ENCODE measurements at regions of chr13 and their contacts with region 1.

Region 1: DNA sequence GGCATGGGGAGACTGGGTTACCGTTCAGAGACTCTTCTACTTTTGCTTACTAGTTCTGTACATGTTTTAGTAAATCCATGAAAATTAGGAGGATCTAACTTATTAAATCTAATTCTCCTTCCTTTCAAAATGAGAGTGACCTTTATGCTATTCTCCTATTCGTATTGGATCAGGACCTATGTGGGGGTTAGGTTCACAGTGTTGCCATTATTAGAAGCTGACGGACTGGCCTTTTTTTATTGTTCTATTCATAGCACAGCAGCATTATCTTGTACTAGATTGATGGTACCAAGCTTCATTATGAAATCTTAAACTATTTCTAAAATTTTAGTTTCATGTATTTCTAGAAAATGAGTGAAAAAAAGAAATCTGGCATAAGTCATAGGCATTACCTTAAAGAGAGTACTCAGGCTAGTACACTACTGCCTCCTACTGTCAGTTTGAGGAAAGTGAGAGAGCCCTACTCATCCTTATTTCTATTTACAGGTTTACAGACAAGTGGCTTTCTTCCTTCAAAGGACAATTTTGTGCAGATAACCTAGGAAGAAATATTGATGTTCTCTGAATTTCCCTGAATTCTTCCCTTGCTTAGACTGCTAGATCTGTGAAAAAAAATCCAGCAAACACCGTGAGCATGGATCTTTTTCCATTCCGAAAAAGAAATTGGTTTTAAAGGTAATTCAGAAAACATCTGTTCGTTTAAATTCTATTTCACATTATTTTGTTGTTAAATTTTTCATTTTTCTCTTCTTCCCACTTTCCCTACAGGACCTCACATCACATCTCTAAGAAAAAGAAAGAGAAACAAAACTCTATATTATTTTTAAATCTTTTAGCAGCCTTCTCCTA is 485.5 kb downstream of the DIAPH3 start:
- DNase-seq: no peak
- ATAC-seq: peak; percentile 70

Region 2: GRCh38 chr13:59144700-59145099 is 533.5 kb before region 1 on chr13:
- intact Hi-C with region 1: no loop called
- DNase-seq: no peak
- ATAC-seq: peak; percentile 65

Region 3: GRCh38 chr13:59477011-59477410 is 201.2 kb before region 1 on chr13:
- intact Hi-C with region 1: loop called (anchors 10 kb)
- DNase-seq: no peak
- ATAC-seq: no peak

Region 4: GRCh38 chr13:59531571-59532091 is 146.6 kb before region 1 on chr13:
- intact Hi-C with region 1: loop called (anchors 10 kb)
- DNase-seq: peak; percentile 89
- ATAC-seq: peak; percentile 75

Region 5: GRCh38 chr13:60260440-60260839 is 582.2 kb after region 1 on chr13:
- intact Hi-C with region 1: no loop called
- DNase-seq: no peak
- ATAC-seq: no peak

Region 6: DNA sequence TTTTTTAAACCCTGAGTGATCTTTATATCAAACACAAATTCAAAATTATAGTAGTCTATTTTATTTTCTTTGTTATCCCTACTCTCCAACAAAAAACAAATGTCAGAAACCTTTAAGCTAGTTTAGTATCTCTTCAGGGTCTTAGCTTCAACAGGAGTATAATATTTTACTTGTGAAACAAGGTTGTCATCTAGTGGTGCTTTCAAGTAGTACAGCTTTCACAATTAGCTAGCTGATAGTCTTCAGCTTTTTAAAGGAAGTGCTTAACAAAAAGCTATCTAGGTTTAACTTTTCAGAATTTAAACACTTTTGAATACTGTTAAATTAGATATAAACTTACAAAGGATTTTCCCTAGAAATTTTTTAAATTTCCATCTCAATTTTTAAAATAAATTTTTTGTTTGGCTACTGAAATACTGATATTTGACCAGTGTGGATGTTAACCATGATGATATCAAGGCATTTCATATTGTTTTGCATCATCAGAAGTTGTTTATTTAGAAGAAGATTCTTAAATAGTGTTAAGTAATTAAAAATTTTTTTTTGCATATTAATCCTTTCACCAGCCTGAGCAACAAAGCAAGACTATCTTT is 753.0 kb after region 1 on chr13:
- intact Hi-C with region 1: loop called (anchors 10 kb)
- DNase-seq: no peak
- ATAC-seq: peak; percentile 62

Measured in Right ventricle myocardium inferior (tissue), 1 donor.